ENCODE measurements at regions of chr17 and their contacts with region 1.

Region 1: GRCh38 chr17:51153210-51154072 is at the start of gene NME1:
- DNase-seq: peak; percentile 96
- H3K4me3 ChIP-seq: peak within 1 kb of the TSS; percentile 69 to 72
- H3K27ac ChIP-seq: peak within 1 kb of the TSS; percentile 81 to 94
- H3K4me1 ChIP-seq: peaks cover 9 to 11% of the 10 kb centered on the region in 2 experiments; a peak in 3 of 4 replicates
- H3K27me3 ChIP-seq: no peaks in the 10 kb centered on the region
- CTCF ChIP-seq: peak; percentile 99
- EP300 ChIP-seq: peak; percentile 52 to 76; a peak in 3 of 4 replicates
- RAD21 ChIP-seq: peak; percentile 98
- polyA plus RNA-seq, gene NME1: 654 and 658 TPM in 2 replicates

Region 2: GRCh38 chr17:50995645-50996044 is 157.8 kb before region 1 on chr17:
- CTCF ChIA-PET with region 1: interaction called, 115 read pairs
- POLR2A ChIA-PET with region 1: no interaction called
- DNase-seq: no peak
- H3K4me3 ChIP-seq: no peak overlapping the region
- H3K27ac ChIP-seq: no peak overlapping the region
- H3K4me1 ChIP-seq: no peaks in the 10 kb centered on the region
- H3K27me3 ChIP-seq: no peaks in the 10 kb centered on the region
- CTCF ChIP-seq: no peak
- EP300 ChIP-seq: no peak
- RAD21 ChIP-seq: no peak

Region 3: DNA sequence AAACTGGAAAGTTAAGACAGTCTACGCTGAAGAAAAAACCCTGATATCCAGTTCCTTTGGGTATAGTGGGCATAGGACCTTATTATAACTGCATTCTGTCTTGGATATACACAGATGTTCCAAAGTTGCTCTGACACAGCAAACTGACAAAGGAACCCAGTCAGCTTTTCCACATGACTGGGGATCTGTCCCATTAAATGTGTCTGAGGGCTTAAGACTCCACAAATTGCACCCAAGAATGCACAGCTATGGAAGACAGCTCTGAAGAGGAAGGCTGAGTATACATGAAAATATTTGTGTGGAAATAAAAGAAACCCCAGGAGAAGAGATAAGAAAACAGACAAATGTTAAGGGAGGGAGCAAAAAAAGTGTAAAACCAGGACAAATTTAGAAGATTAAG is 146.8 kb before region 1 on chr17:
- CTCF ChIA-PET with region 1: interaction called, 115 read pairs
- POLR2A ChIA-PET with region 1: interaction called, 6 read pairs
- DNase-seq: no peak
- H3K4me3 ChIP-seq: no peak overlapping the region
- H3K27ac ChIP-seq: peak overlapping the region in 1 of 2 experiments; percentile 1; a peak in 1 of 4 replicates
- H3K4me1 ChIP-seq: no peaks in the 10 kb centered on the region
- H3K27me3 ChIP-seq: no peaks in the 10 kb centered on the region
- CTCF ChIP-seq: no peak
- EP300 ChIP-seq: no peak
- RAD21 ChIP-seq: no peak

Region 4: DNA sequence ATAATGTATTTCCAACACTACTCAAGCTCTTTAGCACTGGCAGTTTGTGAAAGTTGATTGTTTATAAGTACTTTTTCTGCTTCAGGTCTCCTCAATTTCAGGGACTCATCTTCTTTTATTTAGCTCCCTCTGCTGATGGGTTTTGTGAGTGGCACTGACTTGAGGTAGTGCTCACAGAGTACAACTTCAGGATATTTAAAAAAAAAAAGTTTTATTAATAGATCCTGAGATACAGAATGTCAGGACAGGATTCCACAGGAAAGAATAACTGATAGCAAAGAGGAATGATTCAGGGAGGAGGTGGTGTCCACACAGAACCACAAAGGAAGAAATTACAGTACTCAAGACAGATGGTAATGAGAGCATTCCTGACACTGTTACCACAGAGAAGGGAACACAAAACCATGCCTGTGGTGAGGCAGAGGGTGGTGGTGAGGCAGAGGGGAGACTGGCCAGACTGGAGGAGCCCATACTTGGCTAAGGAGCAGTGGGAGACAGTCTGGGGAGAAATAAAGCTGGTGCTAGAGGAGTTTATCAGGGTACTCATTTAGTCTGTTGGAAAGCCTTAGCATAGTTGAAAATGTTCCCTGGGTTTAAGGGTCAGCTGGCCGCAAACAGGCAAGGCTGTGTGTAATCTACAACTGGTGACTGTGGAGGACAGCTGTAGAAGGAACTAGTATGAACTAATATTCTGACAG is 96.5 kb before region 1 on chr17:
- CTCF ChIA-PET with region 1: interaction called, 32 read pairs
- POLR2A ChIA-PET with region 1: no interaction called
- DNase-seq: peak; percentile 49
- H3K4me3 ChIP-seq: peak overlapping the region in 1 of 2 experiments; percentile 5; a peak in 1 of 4 replicates
- H3K27ac ChIP-seq: peak overlapping the region; percentile 51 to 78
- H3K4me1 ChIP-seq: peaks cover 6 to 10% of the 10 kb centered on the region in 2 experiments; a peak in 3 of 4 replicates
- H3K27me3 ChIP-seq: no peaks in the 10 kb centered on the region
- CTCF ChIP-seq: peak; percentile 98
- EP300 ChIP-seq: 0 out of 4 replicates have a peak, but pooled peaks of 1 of the 2 experiments have one; percentile 6
- RAD21 ChIP-seq: peak; percentile 94

Region 5: GRCh38 chr17:51135956-51136355 is 17.5 kb before region 1 on chr17:
- CTCF ChIA-PET with region 1: interaction called, 37 read pairs
- POLR2A ChIA-PET with region 1: interaction called, 5 read pairs
- DNase-seq: no peak
- H3K4me3 ChIP-seq: no peak overlapping the region
- H3K27ac ChIP-seq: no peak overlapping the region
- H3K4me1 ChIP-seq: no peaks in the 10 kb centered on the region; a peak in 1 of 4 replicates
- H3K27me3 ChIP-seq: no peaks in the 10 kb centered on the region
- CTCF ChIP-seq: no peak
- EP300 ChIP-seq: no peak
- RAD21 ChIP-seq: no peak

Region 6: GRCh38 chr17:51166197-51166986 is 13.0 kb after region 1 on chr17 and contains the start of gene NME2:
- CTCF ChIA-PET with region 1: interaction called, 61 read pairs
- POLR2A ChIA-PET with region 1: interaction called, 19 read pairs
- DNase-seq: peak; percentile 100
- H3K4me3 ChIP-seq: peak within 1 kb of the TSS; percentile 64 to 95
- H3K27ac ChIP-seq: peak within 1 kb of the TSS; percentile 69 to 75
- H3K4me1 ChIP-seq: peaks cover 4 to 11% of the 10 kb centered on the region in 2 experiments; a peak in 3 of 4 replicates
- H3K27me3 ChIP-seq: no peaks in the 10 kb centered on the region
- CTCF ChIP-seq: no peak
- EP300 ChIP-seq: no peak
- RAD21 ChIP-seq: no peak
- polyA plus RNA-seq, gene NME2: 1,446 and 1,447 TPM in 2 replicates